ENCODE measurements at regions of chr6 and their contacts with region 1.

Region 1: DNA sequence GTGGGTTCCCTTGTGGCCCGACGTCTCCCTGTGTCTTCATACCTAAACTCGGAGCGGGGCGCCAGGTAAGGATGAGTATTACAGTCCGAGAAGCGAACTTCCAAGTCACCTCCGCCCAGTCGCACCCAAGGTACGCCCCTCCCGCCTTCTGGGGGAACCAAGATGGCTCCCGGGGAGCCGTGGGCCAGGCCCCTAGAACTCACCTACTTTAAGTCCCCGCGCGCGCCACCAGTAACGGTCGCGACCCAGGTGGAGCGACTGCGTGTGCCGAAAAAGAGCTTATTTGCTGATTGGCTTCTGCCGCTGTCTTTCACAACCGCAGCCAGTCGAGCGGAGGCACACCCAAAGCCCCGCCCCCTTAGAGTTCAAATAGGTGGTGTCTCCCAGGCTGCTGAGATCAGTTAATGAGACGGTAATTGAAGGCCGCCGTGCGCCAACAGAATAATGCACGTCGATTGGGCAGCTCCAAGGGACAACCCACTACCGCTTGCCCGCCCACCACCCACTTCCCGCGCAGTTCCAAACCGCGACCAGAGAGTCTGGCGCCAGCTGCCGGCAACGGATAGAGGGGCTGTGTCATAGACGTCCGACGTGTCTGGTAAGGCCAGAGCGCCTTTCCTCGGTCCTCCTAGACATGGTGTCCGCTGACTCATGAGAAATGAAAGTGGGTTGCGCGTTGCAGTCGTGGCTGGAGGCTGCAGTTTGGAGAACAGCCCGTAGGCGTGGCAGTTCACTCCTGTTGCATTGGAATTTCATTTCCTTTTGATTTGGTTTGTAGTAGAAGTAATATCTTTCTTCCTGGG is at the start of gene MDC1:
- DNase-seq: peak; percentile 100
- ATAC-seq: peak; percentile 76
- H3K4me3 ChIP-seq: peak within 1 kb of the TSS; percentile 64 to 66
- H3K27ac ChIP-seq: peak within 1 kb of the TSS; percentile 89
- H3K4me1 ChIP-seq: peaks cover 9 to 43% of the 10 kb centered on the region in 2 experiments
- H3K27me3 ChIP-seq: no peaks in the 10 kb centered on the region
- CTCF ChIP-seq: peak in 1 of 3 experiments; percentile 31; a peak in 3 of 6 replicates
- POLR2A ChIP-seq: peak; percentile 76
- RAD21 ChIP-seq: no peak
- total RNA-seq, gene MDC1: 75.8 TPM

Region 2: GRCh38 chr6:30206799-30207618 is 510.2 kb before region 1 on chr6:
- CTCF ChIA-PET with region 1: no interaction called
- POLR2A ChIA-PET with region 1: no interaction called
- RAD21 ChIA-PET with region 1: no interaction called
- intact Hi-C with region 1: no loop called
- DNase-seq: no peak
- ATAC-seq: no peak
- H3K4me3 ChIP-seq: no peak overlapping the region
- H3K27ac ChIP-seq: no peak overlapping the region
- H3K4me1 ChIP-seq: peaks cover 0 to 9% of the 10 kb centered on the region in 2 experiments; a peak in 3 of 4 replicates
- H3K27me3 ChIP-seq: no peaks in the 10 kb centered on the region
- CTCF ChIP-seq: no peak
- POLR2A ChIP-seq: no peak
- RAD21 ChIP-seq: no peak

Region 3: GRCh38 chr6:30678964-30679726 is 38.1 kb before region 1 on chr6:
- CTCF ChIA-PET with region 1: interaction called, 45 read pairs
- POLR2A ChIA-PET with region 1: interaction called, 6 read pairs
- RAD21 ChIA-PET with region 1: interaction called in 1 of 2 experiments, 4 read pairs
- intact Hi-C with region 1: loop called (anchors 1 kb)
- DNase-seq: no peak
- ATAC-seq: peak; percentile 85
- H3K4me3 ChIP-seq: no peak overlapping the region
- H3K27ac ChIP-seq: 0 out of 2 replicates have a peak overlapping the region, but pooled peaks have one; percentile 8
- H3K4me1 ChIP-seq: peaks cover 22 to 34% of the 10 kb centered on the region in 2 experiments
- H3K27me3 ChIP-seq: no peaks in the 10 kb centered on the region
- CTCF ChIP-seq: peak in 2 of 3 experiments; percentile 96; a peak in 4 of 6 replicates
- POLR2A ChIP-seq: no peak
- RAD21 ChIP-seq: no peak

Region 4: GRCh38 chr6:30686908-30687658 is 30.2 kb before region 1 on chr6:
- CTCF ChIA-PET with region 1: interaction called, 45 read pairs
- POLR2A ChIA-PET with region 1: interaction called, 25 read pairs
- RAD21 ChIA-PET with region 1: interaction called in 1 of 2 experiments, 4 read pairs
- intact Hi-C with region 1: loop called (anchors 1 kb)
- DNase-seq: no peak
- ATAC-seq: peak; percentile 69
- H3K4me3 ChIP-seq: peak overlapping the region; percentile 87 to 98
- H3K27ac ChIP-seq: peak overlapping the region; percentile 98
- H3K4me1 ChIP-seq: peaks cover 62 to 86% of the 10 kb centered on the region in 2 experiments
- H3K27me3 ChIP-seq: no peaks in the 10 kb centered on the region
- CTCF ChIP-seq: no peak
- POLR2A ChIP-seq: peak; percentile 67
- RAD21 ChIP-seq: no peak

Region 5: GRCh38 chr6:30800871-30801270 is 83.6 kb after region 1 on chr6:
- CTCF ChIA-PET with region 1: no interaction called
- POLR2A ChIA-PET with region 1: no interaction called
- RAD21 ChIA-PET with region 1: no interaction called
- intact Hi-C with region 1: no loop called
- DNase-seq: no peak
- ATAC-seq: no peak
- H3K4me3 ChIP-seq: no peak overlapping the region
- H3K27ac ChIP-seq: no peak overlapping the region
- H3K4me1 ChIP-seq: peaks cover 23 to 40% of the 10 kb centered on the region in 2 experiments; a peak in 3 of 4 replicates
- H3K27me3 ChIP-seq: no peaks in the 10 kb centered on the region
- CTCF ChIP-seq: no peak
- POLR2A ChIP-seq: no peak
- RAD21 ChIP-seq: no peak